ENCODE measurements at regions of chr1 and their contacts with region 1.

Region 1: GRCh38 chr1:166327886-166328285 is 161.1 kb upstream of the FAM78B start:
- DNase-seq: no peak
- ATAC-seq: no peak
- H3K4me3 ChIP-seq: no peak overlapping the region
- H3K27ac ChIP-seq: no peak overlapping the region
- H3K4me1 ChIP-seq: no peaks in the 10 kb centered on the region
- H3K27me3 ChIP-seq: no peaks in the 10 kb centered on the region
- CTCF ChIP-seq: no peak
- POLR2A ChIP-seq: no peak

Region 2: GRCh38 chr1:166258017-166258416 is 69.9 kb before region 1 on chr1:
- intact Hi-C with region 1: no loop called
- DNase-seq: no peak
- ATAC-seq: no peak
- H3K4me3 ChIP-seq: no peak overlapping the region
- H3K27ac ChIP-seq: no peak overlapping the region
- H3K4me1 ChIP-seq: no peaks in the 10 kb centered on the region
- H3K27me3 ChIP-seq: no peaks in the 10 kb centered on the region
- CTCF ChIP-seq: no peak
- POLR2A ChIP-seq: no peak

Region 3: GRCh38 chr1:166354411-166354810 is 26.5 kb after region 1 on chr1:
- intact Hi-C with region 1: loop called in 1 of 10 experiments (anchors 2 kb)
- DNase-seq: no peak
- ATAC-seq: no peak
- H3K4me3 ChIP-seq: no peak overlapping the region
- H3K27ac ChIP-seq: no peak overlapping the region
- H3K4me1 ChIP-seq: peaks cover 0 to 3% (median 0%) of the 10 kb centered on the region in 12 donors
- H3K27me3 ChIP-seq: no peaks in the 10 kb centered on the region
- CTCF ChIP-seq: no peak
- POLR2A ChIP-seq: no peak

Region 4: GRCh38 chr1:166395729-166396128 is 67.8 kb after region 1 on chr1:
- intact Hi-C with region 1: no loop called
- DNase-seq: no peak
- ATAC-seq: no peak
- H3K4me3 ChIP-seq: no peak overlapping the region
- H3K27ac ChIP-seq: no peak overlapping the region
- H3K4me1 ChIP-seq: no peaks in the 10 kb centered on the region
- H3K27me3 ChIP-seq: no peaks in the 10 kb centered on the region
- CTCF ChIP-seq: no peak
- POLR2A ChIP-seq: no peak

Measured in heart left ventricle (tissue), 16 donors.